ENCODE measurements at regions of chr17 and their contacts with region 1.

Region 1: GRCh38 chr17:28749516-28750177 is 5.8 kb downstream of the TRAF4 start:
- DNase-seq: no peak
- H3K4me3 ChIP-seq: no peak overlapping the region
- H3K27ac ChIP-seq: peak overlapping the region; percentile 34 to 62 (median 50)
- H3K4me1 ChIP-seq: peaks cover 37 to 50% of the 10 kb centered on the region in 2 donors
- H3K27me3 ChIP-seq: no peaks in the 10 kb centered on the region
- CTCF ChIP-seq: no peak
- POLR2A ChIP-seq: no peak

Region 2: GRCh38 chr17:28686296-28686695 is 63.4 kb before region 1 on chr17:
- intact Hi-C with region 1: loop called (anchors 2 kb)
- DNase-seq: no peak
- H3K4me3 ChIP-seq: no peak overlapping the region
- H3K27ac ChIP-seq: peak overlapping the region in 2 of 3 donors; percentile 29 to 53
- H3K4me1 ChIP-seq: peaks cover 0 to 12% of the 10 kb centered on the region in 2 donors
- H3K27me3 ChIP-seq: no peaks in the 10 kb centered on the region
- CTCF ChIP-seq: no peak
- POLR2A ChIP-seq: no peak